MCF 10A (cell line): ENCODE measurements at regions of chr6 and their contacts with region 1.

Region 1: DNA sequence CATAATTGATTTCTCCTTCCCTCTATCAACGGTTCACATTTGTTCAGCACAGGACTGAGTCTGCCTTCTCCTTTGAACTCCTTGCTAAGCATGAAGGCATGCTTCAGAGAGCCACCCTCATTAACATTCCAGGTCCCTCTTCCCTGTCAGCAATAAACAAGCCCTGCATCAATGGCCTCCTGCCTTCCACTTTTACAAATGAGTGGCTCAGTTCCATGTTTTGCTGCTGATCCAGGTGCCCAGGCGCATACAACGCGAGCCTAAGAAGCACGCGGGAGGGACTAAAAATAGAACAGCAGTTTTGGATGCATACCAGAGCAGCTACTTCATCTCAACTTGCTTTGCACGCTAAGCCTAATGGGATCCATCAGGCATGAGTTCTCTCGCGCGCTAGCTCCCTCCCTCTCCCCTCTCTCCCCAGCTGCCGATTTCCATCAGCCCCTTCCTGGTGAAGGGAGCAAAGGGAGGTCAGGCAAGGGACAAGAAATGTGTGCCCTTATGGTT is 53.4 kb downstream of the TRAF3IP2 start:
- DNase-seq: peak; percentile 81
- H3K4me3 Mint-ChIP-seq: peak overlapping the region; percentile 28
- H3K27ac Mint-ChIP-seq: peak overlapping the region; percentile 21
- H3K4me1 Mint-ChIP-seq: peaks cover 41% of the 10 kb centered on the region
- H3K27me3 Mint-ChIP-seq: no peaks in the 10 kb centered on the region
- CTCF ChIP-seq: no peak

Region 2: DNA sequence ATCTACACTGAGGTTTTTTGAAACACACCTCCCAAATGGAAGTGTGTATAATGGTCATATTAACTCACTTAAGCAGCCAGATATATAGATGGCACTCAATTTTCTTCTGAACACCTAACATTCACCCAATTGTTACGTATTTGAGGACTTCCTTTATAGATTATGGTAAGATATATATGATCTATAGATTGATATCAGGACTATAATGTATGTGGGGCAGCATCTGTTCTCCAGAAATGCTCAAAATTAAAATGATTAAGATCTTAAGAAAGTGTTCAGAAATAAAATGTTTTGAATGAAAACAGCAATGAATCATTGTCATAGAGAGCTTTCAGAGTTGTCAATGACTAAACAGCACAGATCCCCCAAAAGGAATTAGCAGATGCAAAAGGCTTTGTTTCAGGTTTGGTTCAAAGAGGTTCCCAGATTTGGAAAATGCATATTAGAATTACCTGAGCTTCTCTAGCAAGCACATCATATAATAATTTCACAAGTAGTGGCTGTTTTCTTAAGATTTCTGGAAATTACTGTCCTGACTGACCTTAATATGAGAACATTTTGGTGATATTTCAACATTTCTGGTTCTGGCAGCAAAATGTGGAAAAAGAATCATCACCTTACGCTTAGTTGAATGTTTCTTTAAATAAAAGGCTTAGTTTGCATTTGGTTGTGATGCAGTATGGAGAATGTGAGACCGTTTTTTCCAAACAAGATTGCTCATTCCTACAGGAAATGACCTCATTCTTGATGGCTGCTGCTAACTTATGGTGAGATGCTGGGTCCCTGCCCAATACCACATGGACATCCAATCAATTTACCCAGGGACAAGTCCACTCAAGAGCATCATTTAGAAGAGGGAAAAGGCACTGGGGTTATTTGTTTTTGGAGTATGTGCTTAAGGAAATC is 21.9 kb after region 1 on chr6:
- CTCF ChIA-PET with region 1: interaction called, 8 read pairs
- POLR2A ChIA-PET with region 1: interaction called, 10 read pairs
- intact Hi-C with region 1: no loop called
- DNase-seq: peak; percentile 61
- H3K4me3 Mint-ChIP-seq: no peak overlapping the region
- H3K27ac Mint-ChIP-seq: peak overlapping the region; percentile 65
- H3K4me1 Mint-ChIP-seq: peaks cover 22% of the 10 kb centered on the region
- H3K27me3 Mint-ChIP-seq: no peaks in the 10 kb centered on the region
- CTCF ChIP-seq: no peak